ENCODE measurements at regions of chr7 and their contacts with region 1.

Region 1: DNA sequence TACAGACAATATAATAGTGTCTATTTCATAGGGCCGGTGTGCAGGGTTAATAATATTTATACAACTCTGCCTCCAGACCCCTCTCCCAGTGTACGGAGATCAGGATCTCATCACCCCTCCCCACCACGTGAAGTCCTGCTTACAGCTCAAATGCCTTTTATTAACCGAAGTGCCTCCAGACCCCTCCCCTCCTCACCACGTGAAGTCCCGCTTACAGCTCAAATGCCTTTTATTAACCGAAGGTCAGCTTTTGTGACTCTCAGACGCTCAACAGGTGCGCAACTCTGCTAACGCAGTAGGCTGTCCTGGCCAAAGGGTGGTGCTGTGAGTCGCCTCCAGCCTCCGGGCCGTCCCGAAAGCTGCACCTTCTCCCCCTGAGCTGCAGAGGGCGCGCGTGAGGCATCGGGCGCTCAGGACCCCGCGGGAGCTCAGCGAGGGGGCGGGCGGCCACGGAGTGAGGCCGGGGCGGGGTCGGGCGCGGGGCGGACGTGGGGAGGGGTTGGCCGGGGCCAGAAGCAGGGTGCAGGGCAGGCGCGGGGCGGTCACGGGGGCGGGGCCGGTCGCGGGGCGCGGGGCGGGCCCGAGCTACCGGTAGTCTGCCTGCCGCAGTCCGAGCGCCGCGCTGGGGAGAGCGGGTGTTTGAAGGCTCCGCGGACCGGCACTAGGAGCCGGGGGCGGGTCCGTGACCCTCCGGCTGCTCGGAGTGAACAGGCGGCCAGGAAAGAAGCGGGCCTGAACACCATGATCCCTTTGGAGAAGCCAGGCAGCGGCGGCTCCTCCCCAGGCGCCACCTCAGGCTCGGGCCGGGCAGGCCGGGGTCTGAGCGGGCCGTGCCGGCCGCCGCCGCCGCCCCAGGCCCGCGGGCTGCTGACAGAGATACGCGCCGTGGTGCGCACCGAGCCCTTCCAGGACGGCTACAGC is at the start of gene STK17A:
- DNase-seq: peak; percentile 91 to 96 (median 95)
- H3K4me3 ChIP-seq: peak within 1 kb of the TSS; percentile 96
- H3K4me3 Mint-ChIP-seq: peak within 1 kb of the TSS; percentile 95 to 99 (median 96)
- H3K27ac ChIP-seq: peak within 1 kb of the TSS; percentile 94
- H3K27ac Mint-ChIP-seq: peak within 1 kb of the TSS; percentile 95 to 100 (median 96)
- H3K4me1 ChIP-seq: peaks cover 12% of the 10 kb centered on the region
- H3K4me1 Mint-ChIP-seq: peaks cover 17 to 30% (median 22%) of the 10 kb centered on the region in 3 donors
- H3K27me3 ChIP-seq: no peaks in the 10 kb centered on the region
- H3K27me3 Mint-ChIP-seq: peaks cover 0 to 7% of the 10 kb centered on the region in 2 donors
- total RNA-seq, gene STK17A: 45.5 to 45.8 TPM

Region 2: GRCh38 chr7:43465581-43466554 is 116.9 kb before region 1 on chr7:
- CTCF ChIA-PET with region 1: no interaction called
- POLR2A ChIA-PET with region 1: no interaction called
- DNase-seq: no peak
- H3K4me3 ChIP-seq: no peak overlapping the region
- H3K4me3 Mint-ChIP-seq: no peak overlapping the region
- H3K27ac ChIP-seq: no peak overlapping the region
- H3K27ac Mint-ChIP-seq: peak overlapping the region in 1 of 8 donors; percentile 17
- H3K4me1 ChIP-seq: no peaks in the 10 kb centered on the region
- H3K4me1 Mint-ChIP-seq: no peaks in the 10 kb centered on the region
- H3K27me3 ChIP-seq: no peaks in the 10 kb centered on the region
- H3K27me3 Mint-ChIP-seq: peaks cover 7 to 38% of the 10 kb centered on the region in 2 donors

Region 3: DNA sequence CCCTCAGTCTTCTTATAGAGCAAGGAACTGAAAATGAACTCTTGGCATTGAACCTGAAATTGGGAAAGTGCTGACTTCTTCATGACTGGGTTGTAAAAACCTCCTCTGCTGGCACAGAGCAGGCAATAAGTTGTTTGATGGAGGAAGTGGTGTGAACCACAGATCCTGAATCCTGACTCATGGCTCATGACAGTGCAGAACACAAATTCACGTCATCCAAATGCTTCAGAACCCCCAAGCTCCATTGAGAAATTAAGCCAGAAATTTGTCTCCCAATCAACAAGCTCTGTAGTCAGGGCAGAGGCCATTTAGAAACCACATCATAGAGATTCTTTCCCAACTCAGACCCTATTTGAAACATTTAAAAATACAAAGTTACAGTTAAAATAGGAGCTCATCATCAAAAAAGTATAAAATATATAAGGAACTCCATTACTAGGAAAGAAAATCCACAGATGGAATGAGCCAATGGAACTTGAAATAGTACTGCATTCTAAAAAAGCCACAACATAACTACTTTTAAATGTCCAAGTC is 10.2 kb before region 1 on chr7:
- CTCF ChIA-PET with region 1: interaction called, 28 read pairs
- POLR2A ChIA-PET with region 1: no interaction called
- DNase-seq: no peak
- H3K4me3 ChIP-seq: no peak overlapping the region
- H3K4me3 Mint-ChIP-seq: no peak overlapping the region
- H3K27ac ChIP-seq: no peak overlapping the region
- H3K27ac Mint-ChIP-seq: peak overlapping the region in 1 of 8 donors; percentile 57
- H3K4me1 ChIP-seq: no peaks in the 10 kb centered on the region
- H3K4me1 Mint-ChIP-seq: peaks cover 0 to 5% (median 5%) of the 10 kb centered on the region in 3 donors
- H3K27me3 ChIP-seq: no peaks in the 10 kb centered on the region
- H3K27me3 Mint-ChIP-seq: peaks cover 0 to 1% of the 10 kb centered on the region in 2 donors

Region 4: GRCh38 chr7:43618073-43618472 is 35.3 kb after region 1 on chr7:
- CTCF ChIA-PET with region 1: interaction called, 39 read pairs
- POLR2A ChIA-PET with region 1: interaction called, 8 read pairs
- DNase-seq: no peak
- H3K4me3 ChIP-seq: no peak overlapping the region
- H3K4me3 Mint-ChIP-seq: no peak overlapping the region
- H3K27ac ChIP-seq: no peak overlapping the region
- H3K27ac Mint-ChIP-seq: no peak overlapping the region
- H3K4me1 ChIP-seq: peaks cover 98% of the 10 kb centered on the region
- H3K4me1 Mint-ChIP-seq: peaks cover 5 to 59% (median 54%) of the 10 kb centered on the region in 3 donors
- H3K27me3 ChIP-seq: no peaks in the 10 kb centered on the region
- H3K27me3 Mint-ChIP-seq: no peaks in the 10 kb centered on the region

Region 5: GRCh38 chr7:43639858-43640491 is 57.2 kb after region 1 on chr7:
- CTCF ChIA-PET with region 1: interaction called, 49 read pairs
- POLR2A ChIA-PET with region 1: interaction called, 11 read pairs
- DNase-seq: no peak
- H3K4me3 ChIP-seq: no peak overlapping the region
- H3K4me3 Mint-ChIP-seq: peak overlapping the region in 3 of 7 donors; percentile 10 to 47 (median 41)
- H3K27ac ChIP-seq: no peak overlapping the region
- H3K27ac Mint-ChIP-seq: peak overlapping the region; percentile 62 to 93 (median 86)
- H3K4me1 ChIP-seq: peaks cover 93% of the 10 kb centered on the region
- H3K4me1 Mint-ChIP-seq: peaks cover 91 to 99% (median 93%) of the 10 kb centered on the region in 3 donors
- H3K27me3 ChIP-seq: no peaks in the 10 kb centered on the region
- H3K27me3 Mint-ChIP-seq: no peaks in the 10 kb centered on the region

Region 6: GRCh38 chr7:43669286-43670081 is 86.7 kb after region 1 on chr7:
- CTCF ChIA-PET with region 1: interaction called, 17 read pairs
- POLR2A ChIA-PET with region 1: interaction called, 11 read pairs
- DNase-seq: peak; percentile 46 to 85 (median 68)
- H3K4me3 ChIP-seq: no peak overlapping the region
- H3K4me3 Mint-ChIP-seq: peak overlapping the region; percentile 33 to 91 (median 71)
- H3K27ac ChIP-seq: peak overlapping the region; percentile 28
- H3K27ac Mint-ChIP-seq: peak overlapping the region; percentile 80 to 98 (median 92)
- H3K4me1 ChIP-seq: peaks cover 36% of the 10 kb centered on the region
- H3K4me1 Mint-ChIP-seq: peaks cover 69 to 90% (median 88%) of the 10 kb centered on the region in 3 donors
- H3K27me3 ChIP-seq: no peaks in the 10 kb centered on the region
- H3K27me3 Mint-ChIP-seq: peaks cover 0 to 2% of the 10 kb centered on the region in 2 donors

Region 7: GRCh38 chr7:43700059-43700501 is 117.3 kb after region 1 on chr7:
- CTCF ChIA-PET with region 1: interaction called, 319 read pairs
- POLR2A ChIA-PET with region 1: interaction called, 89 read pairs
- DNase-seq: peak in 2 of 5 donors; percentile 60 to 64
- H3K4me3 ChIP-seq: no peak overlapping the region
- H3K4me3 Mint-ChIP-seq: peak overlapping the region in 6 of 7 donors; percentile 17 to 56 (median 36)
- H3K27ac ChIP-seq: no peak overlapping the region
- H3K27ac Mint-ChIP-seq: peak overlapping the region; percentile 5 to 73 (median 46)
- H3K4me1 ChIP-seq: peaks cover 35% of the 10 kb centered on the region
- H3K4me1 Mint-ChIP-seq: peaks cover 30 to 68% (median 44%) of the 10 kb centered on the region in 3 donors
- H3K27me3 ChIP-seq: no peaks in the 10 kb centered on the region
- H3K27me3 Mint-ChIP-seq: no peaks in the 10 kb centered on the region

Region 8: GRCh38 chr7:43729214-43729923 is 146.6 kb after region 1 on chr7 and contains the start of gene COA1:
- CTCF ChIA-PET with region 1: interaction called, 38 read pairs
- POLR2A ChIA-PET with region 1: interaction called, 8 read pairs
- DNase-seq: peak; percentile 63 to 83 (median 79)
- H3K4me3 ChIP-seq: peak within 1 kb of the TSS; percentile 95
- H3K4me3 Mint-ChIP-seq: peak within 1 kb of the TSS; percentile 91 to 100 (median 95)
- H3K27ac ChIP-seq: peak within 1 kb of the TSS; percentile 86
- H3K27ac Mint-ChIP-seq: peak within 1 kb of the TSS; percentile 82 to 94 (median 90)
- H3K4me1 ChIP-seq: peaks cover 23% of the 10 kb centered on the region
- H3K4me1 Mint-ChIP-seq: peaks cover 34 to 51% (median 41%) of the 10 kb centered on the region in 3 donors
- H3K27me3 ChIP-seq: no peaks in the 10 kb centered on the region
- H3K27me3 Mint-ChIP-seq: no peaks in the 10 kb centered on the region
- total RNA-seq, gene COA1: 75.9 to 81.6 TPM